HEK293 (cell line): ENCODE measurements at regions of chr11 and their contacts with region 1.

Region 1: GRCh38 chr11:133082851-133083488 is 449.3 kb downstream of the OPCML start:
- H3K4me3 ChIP-seq: peak overlapping the region; percentile 43
- H3K27ac ChIP-seq: peak overlapping the region; percentile 9; the same call in 1 of the 2 replicates
- H3K4me1 ChIP-seq: no peaks in the 10 kb centered on the region
- CTCF ChIP-seq: no peak

Region 2: GRCh38 chr11:132604431-132604830 is 478.5 kb before region 1 on chr11:
- CTCF ChIA-PET with region 1: no interaction called
- POLR2A ChIA-PET with region 1: no interaction called
- H3K4me3 ChIP-seq: no peak overlapping the region
- H3K27ac ChIP-seq: no peak overlapping the region
- H3K4me1 ChIP-seq: no peaks in the 10 kb centered on the region
- CTCF ChIP-seq: no peak

Region 3: GRCh38 chr11:133070791-133071190 is 12.2 kb before region 1 on chr11:
- CTCF ChIA-PET with region 1: interaction called, 20 read pairs
- POLR2A ChIA-PET with region 1: no interaction called
- H3K4me3 ChIP-seq: no peak overlapping the region
- H3K27ac ChIP-seq: no peak overlapping the region
- H3K4me1 ChIP-seq: no peaks in the 10 kb centered on the region
- CTCF ChIP-seq: no peak

Region 4: DNA sequence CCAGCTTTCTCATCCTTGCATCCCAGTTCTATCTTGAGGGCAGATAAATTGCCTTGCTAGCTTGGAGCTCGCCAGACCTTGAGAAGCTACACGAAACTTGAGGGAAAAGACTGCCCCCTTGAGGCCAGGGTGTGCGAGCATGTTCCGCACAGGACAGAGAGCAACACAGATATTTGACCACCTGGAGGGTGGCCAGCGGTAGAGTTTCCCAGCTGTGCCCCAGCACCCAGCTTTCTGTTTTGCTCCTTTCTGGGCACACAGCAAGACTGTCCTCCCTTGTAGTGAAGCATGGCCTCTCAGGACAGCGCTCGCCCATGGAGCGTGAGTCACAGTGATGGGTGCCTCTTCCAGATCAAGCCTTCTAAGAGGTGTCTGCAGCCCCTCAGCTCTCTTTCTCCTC is 738.8 kb after region 1 on chr11:
- CTCF ChIA-PET with region 1: interaction called, 16 read pairs
- POLR2A ChIA-PET with region 1: no interaction called
- H3K4me3 ChIP-seq: no peak overlapping the region
- H3K27ac ChIP-seq: no peak overlapping the region
- H3K4me1 ChIP-seq: no peaks in the 10 kb centered on the region
- CTCF ChIP-seq: 0 out of 2 replicates have a peak, but pooled peaks have one; percentile 26

Region 5: DNA sequence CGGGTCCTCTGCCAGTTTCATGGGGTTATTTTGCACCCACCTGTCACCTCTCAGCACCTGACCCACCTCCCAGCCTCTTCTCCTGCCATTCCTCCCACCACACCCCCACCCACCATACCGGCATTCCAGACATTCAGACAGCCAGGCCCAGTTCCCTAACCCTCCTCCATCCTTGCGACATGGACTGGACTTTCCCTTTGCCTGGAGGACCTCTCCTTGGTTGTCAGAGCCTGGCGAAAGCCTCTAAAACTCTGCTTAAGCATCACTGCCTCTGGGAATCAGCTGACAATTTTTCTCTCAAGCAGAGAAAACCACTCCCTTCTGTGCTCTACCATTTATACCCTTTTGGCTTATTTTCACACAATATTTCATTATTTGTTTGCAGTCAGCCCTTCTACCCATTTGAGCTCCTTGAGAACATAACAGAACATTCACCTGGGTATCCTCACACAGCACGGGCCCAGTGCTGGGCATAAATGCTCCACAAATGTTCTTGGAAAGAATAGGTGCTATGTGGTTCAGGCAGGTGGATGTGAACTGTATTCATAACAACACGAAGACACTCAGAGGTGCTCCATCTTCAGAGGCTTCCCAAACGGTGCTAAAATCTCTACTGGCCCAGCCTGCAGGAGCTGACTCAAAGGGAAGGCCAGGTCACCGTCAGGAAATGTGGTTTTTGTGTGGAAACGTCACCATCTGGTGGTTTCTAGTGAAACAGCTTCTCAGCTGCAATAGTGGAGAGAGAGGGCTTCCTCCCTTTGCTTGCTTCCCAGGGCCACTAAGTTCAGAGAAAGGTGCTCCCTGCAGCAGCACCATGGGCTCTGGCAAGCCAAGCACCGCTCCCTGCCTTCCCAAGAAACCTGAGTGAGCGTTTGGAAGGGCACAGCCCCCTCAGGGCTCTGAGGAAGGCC is 752.0 kb after region 1 on chr11:
- CTCF ChIA-PET with region 1: interaction called, 79 read pairs
- POLR2A ChIA-PET with region 1: no interaction called
- H3K4me3 ChIP-seq: no peak overlapping the region
- H3K27ac ChIP-seq: no peak overlapping the region
- H3K4me1 ChIP-seq: no peaks in the 10 kb centered on the region
- CTCF ChIP-seq: 0 out of 2 replicates have a peak, but pooled peaks have one; percentile 37